ENCODE measurements at regions of chr1 and their contacts with region 1.

Region 1: DNA sequence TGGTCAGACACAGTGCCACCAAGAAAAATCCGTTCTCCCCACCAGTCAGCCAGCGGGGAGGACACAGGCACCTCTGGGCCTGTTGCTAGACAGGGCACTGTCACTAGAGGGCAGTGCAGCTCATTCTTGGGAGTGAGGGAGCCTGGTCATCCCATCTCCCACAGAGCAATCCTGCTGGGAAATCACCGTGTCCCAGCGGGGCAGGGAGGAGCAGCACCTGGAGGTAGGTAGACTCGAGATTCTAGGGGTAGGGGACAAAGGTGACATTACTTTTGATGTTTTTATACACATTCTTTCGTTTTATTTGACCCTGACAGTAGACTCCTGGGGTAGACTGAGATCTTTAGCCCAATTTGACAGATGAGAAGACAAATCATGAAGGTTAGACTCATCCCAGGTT is 6.7 kb upstream of the CAMK1G start:
- H3K4me3 ChIP-seq: no peak overlapping the region
- H3K27ac ChIP-seq: no peak overlapping the region
- H3K4me1 ChIP-seq: no peaks in the 10 kb centered on the region
- CTCF ChIP-seq: peak; percentile 82

Region 2: DNA sequence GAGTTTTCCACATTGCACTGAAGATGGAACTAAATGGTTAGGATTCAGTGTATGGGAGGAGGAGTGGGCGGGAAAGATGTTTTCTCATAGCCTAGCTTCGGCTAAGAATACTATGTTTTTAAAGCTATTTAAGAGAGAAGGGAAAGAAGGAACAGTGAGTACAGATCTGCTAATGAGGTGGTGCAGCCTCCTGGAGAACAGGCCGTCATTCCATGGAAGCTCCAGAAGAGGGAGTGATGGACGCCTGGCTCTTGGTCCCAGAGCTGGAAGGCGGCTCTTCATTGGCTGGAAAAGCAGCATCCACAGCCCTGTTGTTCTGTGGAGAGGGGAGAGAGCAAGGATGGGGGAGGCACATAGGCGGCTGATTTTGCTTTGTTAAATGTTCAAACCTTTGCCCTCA is 13.6 kb after region 1 on chr1:
- CTCF ChIA-PET with region 1: interaction called, 36 read pairs
- POLR2A ChIA-PET with region 1: no interaction called
- H3K4me3 ChIP-seq: no peak overlapping the region
- H3K27ac ChIP-seq: no peak overlapping the region
- H3K4me1 ChIP-seq: no peaks in the 10 kb centered on the region
- CTCF ChIP-seq: no peak

Region 3: GRCh38 chr1:209607795-209608178 is 31.0 kb after region 1 on chr1:
- CTCF ChIA-PET with region 1: interaction called, 10 read pairs
- POLR2A ChIA-PET with region 1: no interaction called
- H3K4me3 ChIP-seq: no peak overlapping the region
- H3K27ac ChIP-seq: no peak overlapping the region
- H3K4me1 ChIP-seq: no peaks in the 10 kb centered on the region
- CTCF ChIP-seq: no peak

Region 4: GRCh38 chr1:209627732-209628196 is 51.0 kb after region 1 on chr1:
- CTCF ChIA-PET with region 1: interaction called, 11 read pairs
- POLR2A ChIA-PET with region 1: no interaction called
- H3K4me3 ChIP-seq: no peak overlapping the region
- H3K27ac ChIP-seq: no peak overlapping the region
- H3K4me1 ChIP-seq: no peaks in the 10 kb centered on the region
- CTCF ChIP-seq: peak; percentile 90

Region 5: GRCh38 chr1:209692745-209693504 is 116.1 kb after region 1 on chr1:
- CTCF ChIA-PET with region 1: interaction called, 75 read pairs
- POLR2A ChIA-PET with region 1: no interaction called
- H3K4me3 ChIP-seq: no peak overlapping the region
- H3K27ac ChIP-seq: no peak overlapping the region
- H3K4me1 ChIP-seq: no peaks in the 10 kb centered on the region
- CTCF ChIP-seq: peak; percentile 55; the same call in 1 of the 2 replicates

Region 6: GRCh38 chr1:209747580-209748262 is 170.9 kb after region 1 on chr1:
- CTCF ChIA-PET with region 1: interaction called, 11 read pairs
- POLR2A ChIA-PET with region 1: no interaction called
- H3K4me3 ChIP-seq: no peak overlapping the region
- H3K27ac ChIP-seq: no peak overlapping the region
- H3K4me1 ChIP-seq: peaks cover 6% of the 10 kb centered on the region; the same call in 1 of the 2 replicates
- CTCF ChIP-seq: peak; percentile 98